Right ventricle myocardium superior (tissue), 1 donor: ENCODE measurements at regions of chr2 and their contacts with region 1.

Region 1: GRCh38 chr2:70647873-70648481 is 94.4 kb upstream of the TGFA start:
- DNase-seq: peak; percentile 69
- ATAC-seq: peak; percentile 65

Region 2: DNA sequence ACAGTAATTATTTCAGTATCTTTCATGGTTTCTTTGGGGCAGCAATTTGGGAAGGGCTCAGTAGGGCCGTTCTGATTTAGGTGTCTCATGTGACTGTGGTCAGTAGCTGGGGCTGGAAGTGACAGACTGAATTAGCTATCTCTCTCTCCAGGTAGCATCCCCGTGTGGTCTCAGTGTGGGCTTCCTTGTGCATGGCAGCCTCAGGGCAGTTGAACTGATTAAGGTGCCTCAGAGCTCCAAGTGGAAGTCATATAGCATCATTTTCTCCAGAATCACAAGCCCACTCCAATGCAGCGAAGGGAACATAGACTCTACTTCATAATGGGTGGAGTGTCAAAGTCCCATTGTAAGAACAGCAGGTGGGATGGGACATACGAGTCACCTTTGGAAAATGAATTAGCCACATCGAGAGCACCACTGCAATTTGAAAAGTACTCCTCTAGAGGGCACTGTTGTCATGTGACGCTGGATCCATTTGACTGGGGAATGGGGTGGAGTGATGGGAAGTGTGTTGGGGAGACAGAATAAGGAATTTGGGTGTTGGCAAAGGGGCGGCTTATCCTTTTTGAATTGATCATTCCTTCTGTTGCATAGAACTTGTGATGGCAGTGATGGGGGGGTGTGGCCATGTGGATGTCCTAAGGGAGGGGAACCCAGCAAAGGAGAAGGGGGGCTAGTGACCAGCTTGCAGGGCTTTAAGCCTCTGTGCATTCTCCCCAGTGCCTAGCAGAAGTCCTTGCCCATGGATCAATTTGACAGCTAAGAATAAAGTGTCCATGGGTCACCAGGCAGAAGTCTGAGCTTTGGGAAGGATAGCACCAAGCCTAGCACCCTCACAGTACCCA is 306.8 kb before region 1 on chr2:
- intact Hi-C with region 1: loop called (anchors 10 kb)
- DNase-seq: no peak
- ATAC-seq: peak; percentile 60

Region 3: GRCh38 chr2:70509553-70509952 is 138.4 kb before region 1 on chr2:
- intact Hi-C with region 1: no loop called
- DNase-seq: no peak
- ATAC-seq: no peak